ENCODE measurements at regions of chr13 and their contacts with region 1.

Region 1: GRCh38 chr13:75076476-75076875 is 405.5 kb downstream of the TBC1D4 start:
- DNase-seq: no peak

Region 2: DNA sequence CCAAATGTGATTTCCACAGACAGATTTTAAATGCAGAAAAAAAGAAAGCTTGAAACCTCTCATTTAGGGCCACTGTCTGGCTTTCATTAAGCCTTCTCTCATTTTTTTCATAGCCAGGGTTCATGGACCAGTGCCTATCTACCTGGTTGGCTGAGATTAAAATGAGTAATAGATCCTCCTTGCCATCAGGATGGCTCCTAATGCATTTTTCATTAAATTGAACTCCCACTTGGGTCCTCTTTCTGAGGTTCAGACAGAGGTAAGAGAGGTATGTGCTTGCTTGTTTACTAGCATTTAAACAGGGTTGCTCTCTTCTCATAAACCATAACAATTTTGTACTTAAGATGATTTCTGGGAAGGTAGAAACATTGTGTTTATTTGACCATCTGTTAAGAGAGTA is 67.5 kb before region 1 on chr13:
- intact Hi-C with region 1: loop called in 1 of 2 experiments (anchors 2 kb)
- DNase-seq: no peak